PC-9 (cell line): ENCODE measurements at regions of chr15 and their contacts with region 1.

Region 1: GRCh38 chr15:70763120-70763878 is at the start of gene UACA:
- DNase-seq: peak; percentile 86 to 99
- H3K4me3 ChIP-seq: peak within 1 kb of the TSS; percentile 93
- H3K27ac ChIP-seq: peak within 1 kb of the TSS; percentile 75
- H3K4me1 ChIP-seq: peaks cover 24% of the 10 kb centered on the region
- H3K27me3 ChIP-seq: no peaks in the 10 kb centered on the region
- CTCF ChIP-seq: no peak
- total RNA-seq, gene UACA: 59.9 and 64.5 TPM in 2 replicates

Region 2: DNA sequence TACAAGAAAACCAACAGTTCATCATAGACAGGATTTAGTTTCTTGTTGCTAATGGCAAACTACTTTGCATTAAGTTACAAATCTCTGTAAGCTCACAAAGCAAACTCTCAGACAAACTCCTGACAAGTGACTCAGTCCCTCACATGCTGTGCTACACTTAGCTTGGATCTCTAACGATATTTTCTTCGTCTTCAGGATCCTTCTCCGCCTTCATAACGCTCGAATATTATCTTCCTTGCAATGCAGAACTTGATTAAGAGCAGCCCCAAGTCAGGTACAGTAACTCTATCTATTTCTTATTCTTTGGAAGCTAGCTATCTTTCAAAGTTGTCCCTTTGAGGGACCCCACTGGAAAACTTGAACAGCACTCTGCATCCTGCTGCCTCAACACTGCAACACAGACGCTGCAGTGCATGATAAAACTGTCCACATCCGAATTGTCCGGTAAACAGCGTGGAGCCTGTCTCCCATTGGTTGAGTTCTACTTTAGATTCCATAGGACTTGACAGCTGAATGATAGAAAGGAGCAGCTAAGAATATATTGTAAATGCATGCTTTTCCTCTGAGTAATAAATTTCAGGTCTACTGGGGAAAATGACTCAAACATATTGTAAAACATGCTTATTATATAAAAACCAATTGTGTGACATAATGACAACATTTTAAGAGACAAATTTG is 61.3 kb before region 1 on chr15:
- CTCF ChIA-PET with region 1: no interaction called
- POLR2A ChIA-PET with region 1: no interaction called
- intact Hi-C with region 1: loop called (anchors 5 kb)
- DNase-seq: no peak
- H3K4me3 ChIP-seq: no peak overlapping the region
- H3K27ac ChIP-seq: no peak overlapping the region
- H3K4me1 ChIP-seq: 0 out of 2 replicates have a peak, but pooled peaks cover 13% of the 10 kb centered on the region
- H3K27me3 ChIP-seq: no peaks in the 10 kb centered on the region
- CTCF ChIP-seq: no peak

Region 3: GRCh38 chr15:70783599-70784022 is 20.3 kb after region 1 on chr15:
- CTCF ChIA-PET with region 1: interaction called, 4 read pairs
- POLR2A ChIA-PET with region 1: interaction called, 4 read pairs
- intact Hi-C with region 1: loop called (anchors 2 kb)
- DNase-seq: peak; percentile 46 to 68
- H3K4me3 ChIP-seq: no peak overlapping the region
- H3K27ac ChIP-seq: peak overlapping the region; percentile 37; the same call in 1 of the 2 replicates
- H3K4me1 ChIP-seq: peaks cover 52% of the 10 kb centered on the region
- H3K27me3 ChIP-seq: no peaks in the 10 kb centered on the region
- CTCF ChIP-seq: no peak

Region 4: GRCh38 chr15:70799667-70800450 is 36.6 kb after region 1 on chr15:
- CTCF ChIA-PET with region 1: no interaction called
- POLR2A ChIA-PET with region 1: no interaction called
- intact Hi-C with region 1: loop called (anchors 5 kb)
- DNase-seq: peak; percentile 35 to 48
- H3K4me3 ChIP-seq: no peak overlapping the region
- H3K27ac ChIP-seq: no peak overlapping the region
- H3K4me1 ChIP-seq: peaks cover 22% of the 10 kb centered on the region
- H3K27me3 ChIP-seq: no peaks in the 10 kb centered on the region
- CTCF ChIP-seq: no peak

Region 5: GRCh38 chr15:70812827-70813364 is 49.6 kb after region 1 on chr15:
- CTCF ChIA-PET with region 1: interaction called, 4 read pairs
- POLR2A ChIA-PET with region 1: interaction called, 5 read pairs
- intact Hi-C with region 1: loop called (anchors 1 kb)
- DNase-seq: no peak
- H3K4me3 ChIP-seq: no peak overlapping the region
- H3K27ac ChIP-seq: no peak overlapping the region
- H3K4me1 ChIP-seq: no peaks in the 10 kb centered on the region
- H3K27me3 ChIP-seq: no peaks in the 10 kb centered on the region
- CTCF ChIP-seq: no peak